HepG2 (cell line): ENCODE measurements at regions of chr1 and their contacts with region 1.

Region 1: GRCh38 chr1:6784560-6785317 is 515 bp upstream of the CAMTA1 start:
- DNase-seq: peak; percentile 100
- ATAC-seq: peak; percentile 91
- H3K4me3 ChIP-seq: peak overlapping the region; percentile 83 to 97 (median 83)
- H3K27ac ChIP-seq: peak overlapping the region; percentile 98
- H3K4me1 ChIP-seq: peaks cover 45% of the 10 kb centered on the region
- H3K27me3 ChIP-seq: no peaks in the 10 kb centered on the region
- CTCF ChIP-seq: no peak
- EP300 ChIP-seq: no peak
- POLR2A ChIP-seq: peak; percentile 67 to 73
- RAD21 ChIP-seq: peak; percentile 55

Region 2: GRCh38 chr1:6701437-6702153 is 83.1 kb before region 1 on chr1 and contains the start of gene DNAJC11:
- CTCF ChIA-PET with region 1: interaction called, 3 read pairs
- POLR2A ChIA-PET with region 1: interaction called, 14 read pairs
- in situ Hi-C with region 1: no loop called
- intact Hi-C with region 1: no loop called
- DNase-seq: peak; percentile 80
- ATAC-seq: peak; percentile 91
- H3K4me3 ChIP-seq: peak within 1 kb of the TSS; percentile 93 to 99 (median 99)
- H3K27ac ChIP-seq: peak within 1 kb of the TSS; percentile 96
- H3K4me1 ChIP-seq: peaks cover 23% of the 10 kb centered on the region
- H3K27me3 ChIP-seq: no peaks in the 10 kb centered on the region; a peak in 1 of 5 replicates
- CTCF ChIP-seq: peak; percentile 87
- EP300 ChIP-seq: peak in 1 of 2 experiments; percentile 54; a peak in 1 of 4 replicates
- POLR2A ChIP-seq: peak; percentile 79 to 95
- RAD21 ChIP-seq: peak; percentile 48
- total RNA-seq, gene DNAJC11: 47.6 and 56.8 TPM in 2 replicates

Region 3: DNA sequence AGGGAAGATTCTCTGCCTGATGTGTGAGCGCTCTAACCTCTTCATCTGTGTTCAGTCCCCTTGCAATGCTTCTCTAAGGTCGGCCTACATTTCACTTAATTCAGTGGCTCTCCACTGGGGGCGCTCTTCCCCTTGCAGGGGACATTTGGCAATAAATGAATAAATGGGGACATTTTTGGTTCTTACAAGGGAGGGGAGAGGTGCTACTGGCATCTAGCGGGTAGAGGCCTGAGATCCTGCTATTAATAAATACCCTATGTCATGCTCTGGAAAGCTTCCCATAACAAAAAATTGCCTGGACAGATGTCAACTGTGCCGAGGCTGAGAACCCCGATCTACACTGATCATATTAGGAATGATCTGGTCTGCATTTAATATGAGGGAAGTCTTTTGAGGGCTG is 57.2 kb before region 1 on chr1:
- CTCF ChIA-PET with region 1: no interaction called
- POLR2A ChIA-PET with region 1: interaction called, 4 read pairs
- in situ Hi-C with region 1: no loop called
- intact Hi-C with region 1: loop called (anchors 10 kb)
- DNase-seq: peak; percentile 59
- ATAC-seq: peak; percentile 44; the same call in 2 of the 3 replicates
- H3K4me3 ChIP-seq: no peak overlapping the region
- H3K27ac ChIP-seq: no peak overlapping the region
- H3K4me1 ChIP-seq: peaks cover 25% of the 10 kb centered on the region
- H3K27me3 ChIP-seq: peaks cover 0 to 25% of the 10 kb centered on the region in 2 experiments; a peak in 2 of 5 replicates
- CTCF ChIP-seq: peak; percentile 72
- EP300 ChIP-seq: no peak
- POLR2A ChIP-seq: no peak
- RAD21 ChIP-seq: peak; percentile 55; the same call in 1 of the 2 replicates

Region 4: GRCh38 chr1:6770751-6771440 is 13.8 kb before region 1 on chr1:
- CTCF ChIA-PET with region 1: no interaction called
- POLR2A ChIA-PET with region 1: interaction called, 21 read pairs
- in situ Hi-C with region 1: no loop called
- intact Hi-C with region 1: no loop called
- DNase-seq: peak; percentile 37
- ATAC-seq: peak; percentile 96
- H3K4me3 ChIP-seq: peak overlapping the region in 1 of 3 experiments; percentile 3; a peak in 1 of 6 replicates
- H3K27ac ChIP-seq: no peak overlapping the region
- H3K4me1 ChIP-seq: peaks cover 19% of the 10 kb centered on the region
- H3K27me3 ChIP-seq: peaks cover 0 to 11% of the 10 kb centered on the region in 2 experiments; a peak in 1 of 5 replicates
- CTCF ChIP-seq: no peak
- EP300 ChIP-seq: no peak
- POLR2A ChIP-seq: no peak
- RAD21 ChIP-seq: no peak